ENCODE measurements at regions of chr5 and their contacts with region 1.

Region 1: GRCh38 chr5:142472300-142472951 is 147.6 kb upstream of the SPRY4 start:
- DNase-seq: peak; percentile 83
- H3K4me3 ChIP-seq: no peak overlapping the region
- H3K27ac ChIP-seq: peak overlapping the region; percentile 82
- H3K4me1 ChIP-seq: peaks cover 16% of the 10 kb centered on the region
- H3K27me3 ChIP-seq: no peaks in the 10 kb centered on the region
- CTCF ChIP-seq: no peak
- POLR2A ChIP-seq: peak; percentile 30

Region 2: GRCh38 chr5:142324871-142325724 is 147.3 kb before region 1 on chr5 and contains the start of gene SPRY4:
- CTCF ChIA-PET with region 1: interaction called, 4 read pairs
- POLR2A ChIA-PET with region 1: no interaction called
- dilution Hi-C with region 1: no loop called
- intact Hi-C with region 1: loop called (anchors 1 kb)
- DNase-seq: peak; percentile 98
- H3K4me3 ChIP-seq: peak within 1 kb of the TSS; percentile 76 to 89 (median 81)
- H3K27ac ChIP-seq: peak within 1 kb of the TSS; percentile 88
- H3K4me1 ChIP-seq: peaks cover 48% of the 10 kb centered on the region
- H3K27me3 ChIP-seq: no peaks in the 10 kb centered on the region
- CTCF ChIP-seq: no peak
- POLR2A ChIP-seq: peak; percentile 97
- total RNA-seq, gene SPRY4: 33.9 and 49.5 TPM in 2 replicates

Region 3: DNA sequence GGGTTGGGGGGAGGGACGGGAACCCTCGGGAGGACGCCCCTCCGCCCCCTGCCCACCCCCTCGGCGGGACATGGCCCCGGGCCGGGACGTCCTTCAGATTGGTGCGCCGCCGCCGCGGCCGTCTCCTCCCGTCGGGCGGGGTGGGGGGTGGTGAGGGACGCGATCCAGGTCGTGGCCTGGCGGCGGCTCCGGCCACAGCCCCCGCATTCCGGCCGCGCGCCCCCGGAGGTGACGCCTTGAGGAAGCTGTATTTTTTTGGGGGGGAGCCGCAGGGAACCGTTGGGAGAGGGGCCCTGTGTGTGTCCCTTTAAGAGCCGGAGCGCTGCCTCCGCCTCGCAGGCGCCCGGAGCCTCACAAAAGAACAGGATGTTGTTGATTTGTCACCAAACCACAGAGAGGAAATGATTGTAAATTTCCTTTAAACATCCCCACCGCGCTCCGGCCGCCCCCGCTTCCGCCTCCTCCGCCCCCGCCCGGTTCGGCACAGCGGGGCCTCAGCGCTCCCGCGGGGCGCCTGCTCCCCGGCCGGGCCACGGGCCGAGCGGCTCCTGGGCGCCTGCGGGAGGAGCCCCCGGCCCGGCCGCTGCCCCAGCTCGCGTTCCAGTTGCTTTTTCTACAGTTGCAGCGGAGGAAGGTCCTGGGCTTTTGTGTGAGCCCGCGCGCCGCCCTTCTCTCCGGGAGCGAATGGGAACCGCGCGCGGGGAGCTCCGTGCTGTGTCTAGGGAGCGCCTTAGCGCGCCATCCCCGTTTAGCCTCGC is 115.5 kb before region 1 on chr5:
- CTCF ChIA-PET with region 1: no interaction called
- POLR2A ChIA-PET with region 1: no interaction called
- dilution Hi-C with region 1: no loop called
- intact Hi-C with region 1: loop called (anchors 1 kb)
- DNase-seq: peak; percentile 94
- H3K4me3 ChIP-seq: peak overlapping the region in 1 of 3 experiments; percentile 54
- H3K27ac ChIP-seq: peak overlapping the region; percentile 74
- H3K4me1 ChIP-seq: peaks cover 31% of the 10 kb centered on the region
- H3K27me3 ChIP-seq: no peaks in the 10 kb centered on the region
- CTCF ChIP-seq: no peak
- POLR2A ChIP-seq: peak; percentile 47

Region 4: GRCh38 chr5:142446131-142446959 is 26.1 kb before region 1 on chr5:
- CTCF ChIA-PET with region 1: interaction called, 3 read pairs
- POLR2A ChIA-PET with region 1: no interaction called
- dilution Hi-C with region 1: no loop called
- intact Hi-C with region 1: loop called (anchors 1 kb)
- DNase-seq: peak; percentile 67
- H3K4me3 ChIP-seq: peak overlapping the region in 1 of 3 experiments; percentile 5
- H3K27ac ChIP-seq: peak overlapping the region; percentile 88
- H3K4me1 ChIP-seq: peaks cover 20% of the 10 kb centered on the region
- H3K27me3 ChIP-seq: no peaks in the 10 kb centered on the region
- CTCF ChIP-seq: no peak
- POLR2A ChIP-seq: peak; percentile 64

Region 5: GRCh38 chr5:142542906-142543305 is 70.5 kb after region 1 on chr5:
- CTCF ChIA-PET with region 1: no interaction called
- POLR2A ChIA-PET with region 1: no interaction called
- dilution Hi-C with region 1: no loop called
- intact Hi-C with region 1: loop called (anchors 1 kb)
- DNase-seq: peak; percentile 61
- H3K4me3 ChIP-seq: no peak overlapping the region
- H3K27ac ChIP-seq: peak overlapping the region; percentile 61
- H3K4me1 ChIP-seq: peaks cover 36% of the 10 kb centered on the region
- H3K27me3 ChIP-seq: no peaks in the 10 kb centered on the region
- CTCF ChIP-seq: peak; percentile 19 to 35
- POLR2A ChIP-seq: peak; percentile 23

Measured in endothelial cell of umbilical vein (primary cell).